Heart left ventricle (tissue), 16 donors: ENCODE measurements at regions of chr3 and their contacts with region 1.

Region 1: GRCh38 chr3:125045965-125046364 is 9.8 kb downstream of the HEG1 start:
- DNase-seq: no peak
- ATAC-seq: no peak
- H3K4me3 ChIP-seq: no peak overlapping the region
- H3K27ac ChIP-seq: peak overlapping the region in 10 of 12 donors; percentile 80 to 98 (median 92)
- H3K4me1 ChIP-seq: peaks cover 21 to 100% (median 97%) of the 10 kb centered on the region in 12 donors
- H3K27me3 ChIP-seq: no peaks in the 10 kb centered on the region
- CTCF ChIP-seq: no peak
- POLR2A ChIP-seq: no peak

Region 2: GRCh38 chr3:125003369-125003853 is 42.6 kb before region 1 on chr3:
- intact Hi-C with region 1: loop called in 9 of 10 experiments (anchors 2 to 10 kb)
- DNase-seq: peak in 4 of 5 donors; percentile 58 to 82 (median 67)
- ATAC-seq: peak; percentile 91 to 94 (median 92)
- H3K4me3 ChIP-seq: no peak overlapping the region
- H3K27ac ChIP-seq: peak overlapping the region; percentile 28 to 77 (median 60)
- H3K4me1 ChIP-seq: peaks cover 7 to 73% (median 53%) of the 10 kb centered on the region in 12 donors
- H3K27me3 ChIP-seq: no peaks in the 10 kb centered on the region
- CTCF ChIP-seq: no peak
- POLR2A ChIP-seq: no peak

Region 3: DNA sequence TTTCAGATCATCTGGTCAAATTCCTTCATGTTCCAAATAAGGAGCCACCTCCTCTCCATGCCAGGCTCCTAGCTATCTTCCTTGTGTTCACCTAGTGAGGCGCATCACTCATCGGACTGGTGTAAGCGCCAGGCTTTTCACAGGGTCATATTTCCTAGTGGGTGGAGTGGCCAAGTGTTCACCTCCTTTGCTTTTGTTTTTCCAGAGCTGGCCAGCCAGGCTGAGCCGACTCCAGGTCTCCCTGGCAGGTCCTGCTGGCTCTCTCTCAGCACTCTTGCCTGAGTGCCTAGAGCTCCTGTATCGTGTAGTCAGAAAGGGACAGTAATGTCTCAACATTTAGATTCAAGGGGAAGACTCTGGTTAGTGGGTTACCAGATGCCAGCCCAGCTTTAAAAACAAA is 21.1 kb before region 1 on chr3:
- intact Hi-C with region 1: loop called in 1 of 10 experiments (anchors 2 kb)
- DNase-seq: peak; percentile 40 to 73 (median 66)
- ATAC-seq: peak; percentile 79 to 91 (median 88)
- H3K4me3 ChIP-seq: peak overlapping the region in 3 of 12 donors; percentile 2 to 16 (median 9)
- H3K27ac ChIP-seq: peak overlapping the region; percentile 44 to 83 (median 72)
- H3K4me1 ChIP-seq: peaks cover 0 to 80% (median 48%) of the 10 kb centered on the region in 12 donors
- H3K27me3 ChIP-seq: no peaks in the 10 kb centered on the region
- CTCF ChIP-seq: no peak
- POLR2A ChIP-seq: no peak

Region 4: GRCh38 chr3:125072301-125072700 is 26.3 kb after region 1 on chr3:
- intact Hi-C with region 1: no loop called
- DNase-seq: peak in 1 of 5 donors; percentile 51
- ATAC-seq: peak in 1 of 4 donors; percentile 30
- H3K4me3 ChIP-seq: no peak overlapping the region
- H3K27ac ChIP-seq: no peak overlapping the region
- H3K4me1 ChIP-seq: peaks cover 0 to 13% (median 0%) of the 10 kb centered on the region in 12 donors
- H3K27me3 ChIP-seq: no peaks in the 10 kb centered on the region
- CTCF ChIP-seq: no peak
- POLR2A ChIP-seq: no peak

Region 5: GRCh38 chr3:125141596-125142419 is 95.8 kb after region 1 on chr3:
- intact Hi-C with region 1: loop called in 1 of 10 experiments (anchors 5 kb)
- DNase-seq: peak; percentile 84 to 89 (median 86)
- ATAC-seq: peak; percentile 47 to 88 (median 76)
- H3K4me3 ChIP-seq: peak overlapping the region in 11 of 12 donors; percentile 22 to 58 (median 46)
- H3K27ac ChIP-seq: peak overlapping the region; percentile 66 to 96 (median 79)
- H3K4me1 ChIP-seq: peaks cover 10 to 74% (median 57%) of the 10 kb centered on the region in 12 donors
- H3K27me3 ChIP-seq: no peaks in the 10 kb centered on the region
- CTCF ChIP-seq: peak; percentile 27 to 71 (median 46)
- POLR2A ChIP-seq: peak in 1 of 2 donors; percentile 13

Region 6: GRCh38 chr3:125150525-125151441 is 104.8 kb after region 1 on chr3:
- intact Hi-C with region 1: loop called in 1 of 10 experiments (anchors 10 kb)
- DNase-seq: no peak
- ATAC-seq: no peak
- H3K4me3 ChIP-seq: no peak overlapping the region
- H3K27ac ChIP-seq: peak overlapping the region in 4 of 12 donors; percentile 1 to 53 (median 26)
- H3K4me1 ChIP-seq: peaks cover 0 to 71% (median 40%) of the 10 kb centered on the region in 12 donors
- H3K27me3 ChIP-seq: no peaks in the 10 kb centered on the region
- CTCF ChIP-seq: peak in 11 of 12 donors; percentile 17 to 49 (median 36)
- POLR2A ChIP-seq: no peak